ENCODE measurements at regions of chr20 and their contacts with region 1.

Region 1: GRCh38 chr20:44738813-44739477 is 6.7 kb upstream of the KCNK15 start:
- DNase-seq: peak; percentile 62
- ATAC-seq: peak; percentile 44
- H3K4me3 ChIP-seq: no peak overlapping the region
- H3K4me3 Mint-ChIP-seq: peak overlapping the region; percentile 32
- H3K27ac ChIP-seq: no peak overlapping the region
- H3K27ac Mint-ChIP-seq: no peak overlapping the region
- H3K4me1 ChIP-seq: no peaks in the 10 kb centered on the region
- H3K4me1 Mint-ChIP-seq: peaks cover 28% of the 10 kb centered on the region
- H3K27me3 ChIP-seq: peaks cover 0 to 4% (median 1%) of the 10 kb centered on the region in 4 experiments
- H3K27me3 Mint-ChIP-seq: peaks cover 3% of the 10 kb centered on the region
- CTCF ChIP-seq: no peak

Region 2: GRCh38 chr20:44475694-44476560 is 263.0 kb before region 1 on chr20 and contains the start of gene TTPAL:
- CTCF ChIA-PET with region 1: no interaction called
- POLR2A ChIA-PET with region 1: no interaction called
- intact Hi-C with region 1: loop called (anchors 5 kb)
- DNase-seq: peak; percentile 93
- ATAC-seq: peak; percentile 94
- H3K4me3 ChIP-seq: peak within 1 kb of the TSS; percentile 70 to 99 (median 78)
- H3K4me3 Mint-ChIP-seq: peak within 1 kb of the TSS; percentile 97
- H3K27ac ChIP-seq: peak within 1 kb of the TSS; percentile 90 to 93
- H3K27ac Mint-ChIP-seq: peak within 1 kb of the TSS; percentile 95
- H3K4me1 ChIP-seq: peaks cover 23 to 34% of the 10 kb centered on the region in 2 donors
- H3K4me1 Mint-ChIP-seq: peaks cover 43% of the 10 kb centered on the region
- H3K27me3 ChIP-seq: no peaks in the 10 kb centered on the region
- H3K27me3 Mint-ChIP-seq: peaks cover 2% of the 10 kb centered on the region
- CTCF ChIP-seq: no peak
- total RNA-seq, gene TTPAL: 26.8 and 27.8 TPM in 2 replicates

Region 3: DNA sequence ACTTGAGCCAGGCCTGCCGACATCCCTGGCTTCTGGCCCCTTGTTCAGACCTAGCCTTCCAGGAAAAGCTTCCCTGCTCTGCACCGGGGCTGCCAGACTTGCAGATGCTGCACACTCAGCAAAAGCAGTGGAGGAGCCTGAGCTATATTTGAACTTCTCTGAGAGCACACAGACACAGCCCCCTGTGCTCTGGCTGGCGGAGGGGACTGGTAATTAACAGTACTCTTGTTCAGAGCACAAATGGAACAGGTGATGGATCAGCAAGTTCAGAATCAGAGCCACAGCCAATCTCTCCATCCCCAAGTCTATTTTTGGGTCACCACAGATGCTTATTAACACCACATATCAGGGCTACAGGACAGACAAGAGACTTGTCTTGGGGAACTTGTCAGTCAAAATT is 99.0 kb after region 1 on chr20:
- CTCF ChIA-PET with region 1: no interaction called
- POLR2A ChIA-PET with region 1: no interaction called
- intact Hi-C with region 1: no loop called
- DNase-seq: no peak
- ATAC-seq: no peak
- H3K4me3 ChIP-seq: no peak overlapping the region
- H3K4me3 Mint-ChIP-seq: no peak overlapping the region
- H3K27ac ChIP-seq: no peak overlapping the region
- H3K27ac Mint-ChIP-seq: no peak overlapping the region
- H3K4me1 ChIP-seq: no peaks in the 10 kb centered on the region
- H3K4me1 Mint-ChIP-seq: no peaks in the 10 kb centered on the region
- H3K27me3 ChIP-seq: peaks cover 0 to 24% (median 5%) of the 10 kb centered on the region in 4 experiments
- H3K27me3 Mint-ChIP-seq: peaks cover 30% of the 10 kb centered on the region
- CTCF ChIP-seq: no peak

Measured in B cell (primary cell).